Caco-2 (cell line): ENCODE measurements at regions of chr20 and their contacts with region 1.

Region 1: GRCh38 chr20:50504231-50504823 is 5.9 kb upstream of the PTPN1 start:
- DNase-seq: no peak
- H3K4me3 ChIP-seq: no peak overlapping the region
- H3K4me3 Mint-ChIP-seq: no peak overlapping the region
- H3K27ac Mint-ChIP-seq: no peak overlapping the region
- H3K4me1 ChIP-seq: peaks cover 10% of the 10 kb centered on the region
- H3K4me1 Mint-ChIP-seq: no peaks in the 10 kb centered on the region
- H3K27me3 ChIP-seq: no peaks in the 10 kb centered on the region
- H3K27me3 Mint-ChIP-seq: no peaks in the 10 kb centered on the region
- CTCF ChIP-seq: peak; percentile 43 to 53

Region 2: GRCh38 chr20:50478162-50479036 is 25.9 kb before region 1 on chr20:
- CTCF ChIA-PET with region 1: interaction called, 4 read pairs
- POLR2A ChIA-PET with region 1: no interaction called
- intact Hi-C with region 1: loop called (anchors 1 kb)
- DNase-seq: peak; percentile 91 to 92
- H3K4me3 ChIP-seq: no peak overlapping the region
- H3K4me3 Mint-ChIP-seq: no peak overlapping the region
- H3K27ac Mint-ChIP-seq: no peak overlapping the region
- H3K4me1 ChIP-seq: peaks cover 14% of the 10 kb centered on the region
- H3K4me1 Mint-ChIP-seq: peaks cover 7% of the 10 kb centered on the region
- H3K27me3 ChIP-seq: no peaks in the 10 kb centered on the region
- H3K27me3 Mint-ChIP-seq: no peaks in the 10 kb centered on the region
- CTCF ChIP-seq: peak; percentile 92 to 97

Region 3: GRCh38 chr20:50569864-50570836 is 65.8 kb after region 1 on chr20:
- CTCF ChIA-PET with region 1: interaction called, 37 read pairs
- POLR2A ChIA-PET with region 1: no interaction called
- intact Hi-C with region 1: no loop called
- DNase-seq: peak in 1 of 2 experiments; percentile 65
- H3K4me3 ChIP-seq: no peak overlapping the region
- H3K4me3 Mint-ChIP-seq: no peak overlapping the region
- H3K27ac Mint-ChIP-seq: no peak overlapping the region
- H3K4me1 ChIP-seq: peaks cover 6% of the 10 kb centered on the region; the same call in 1 of the 2 replicates
- H3K4me1 Mint-ChIP-seq: peaks cover 7% of the 10 kb centered on the region
- H3K27me3 ChIP-seq: no peaks in the 10 kb centered on the region
- H3K27me3 Mint-ChIP-seq: no peaks in the 10 kb centered on the region
- CTCF ChIP-seq: peak; percentile 53 to 67